ENCODE measurements at regions of chr19 and their contacts with region 1.

Region 1: DNA sequence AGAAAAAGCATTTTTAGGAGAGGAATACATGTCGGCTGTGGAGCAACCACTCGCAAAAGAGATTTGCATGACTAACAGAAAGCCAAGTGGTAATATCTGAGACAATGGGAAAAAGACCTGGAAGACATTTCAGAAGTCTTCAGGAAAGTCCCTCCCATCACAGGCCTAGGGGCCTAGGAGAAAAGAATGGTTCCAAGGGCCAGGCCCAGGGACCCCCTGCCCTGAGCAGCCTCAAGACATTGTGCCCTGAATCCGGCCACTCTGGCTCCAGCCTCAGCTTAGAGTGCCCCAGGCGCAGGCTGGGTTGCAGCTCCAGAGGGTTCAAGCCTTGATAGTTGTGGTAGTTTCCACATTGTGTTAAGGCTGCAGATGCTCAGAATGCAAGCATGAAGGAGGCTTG is 9.4 kb downstream of the ZNF221 start:
- DNase-seq: no peak
- H3K4me3 ChIP-seq: no peak overlapping the region
- CTCF ChIP-seq: no peak

Region 2: DNA sequence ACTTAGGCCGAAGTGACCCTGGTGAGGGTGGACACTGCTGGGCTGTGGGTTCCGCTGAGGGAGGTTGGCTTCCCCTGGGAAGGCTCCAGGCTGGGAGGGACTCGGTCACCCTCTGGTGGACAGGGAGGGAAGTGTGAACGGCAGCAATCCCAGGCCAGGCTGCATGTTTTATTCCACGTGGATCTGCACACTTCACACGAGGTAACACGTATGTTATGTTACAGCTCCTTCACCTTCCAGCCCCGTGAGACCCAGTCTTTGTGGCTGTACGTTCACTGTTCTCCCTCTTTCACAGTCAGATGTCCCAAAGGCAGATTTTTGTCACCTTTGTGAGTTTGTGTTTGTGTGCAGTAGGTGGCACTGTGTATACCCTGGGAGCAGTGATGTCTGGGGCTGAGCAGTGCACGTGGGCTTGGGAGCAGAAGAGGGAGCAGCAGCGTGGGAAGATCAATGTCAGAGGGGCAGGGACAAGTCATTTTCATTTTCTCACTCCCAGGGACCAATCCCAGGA is 1040.8 kb before region 1 on chr19:
- in situ Hi-C with region 1: no loop called
- DNase-seq: no peak
- H3K4me3 ChIP-seq: no peak overlapping the region
- CTCF ChIP-seq: peak; percentile 37

Region 3: GRCh38 chr19:43908659-43909058 is 51.8 kb before region 1 on chr19:
- in situ Hi-C with region 1: loop called (anchors 5 kb)
- DNase-seq: no peak
- H3K4me3 ChIP-seq: no peak overlapping the region
- CTCF ChIP-seq: no peak

Region 4: GRCh38 chr19:44002566-44003460 is 42.4 kb after region 1 on chr19 and contains the start of gene ZNF230:
- in situ Hi-C with region 1: no loop called
- DNase-seq: peak; percentile 91
- H3K4me3 ChIP-seq: peak within 1 kb of the TSS; percentile 94
- CTCF ChIP-seq: no peak

Measured in astrocyte of the cerebellum (primary cell).